MCF 10A (cell line): ENCODE measurements at regions of chr15 and their contacts with region 1.

Region 1: DNA sequence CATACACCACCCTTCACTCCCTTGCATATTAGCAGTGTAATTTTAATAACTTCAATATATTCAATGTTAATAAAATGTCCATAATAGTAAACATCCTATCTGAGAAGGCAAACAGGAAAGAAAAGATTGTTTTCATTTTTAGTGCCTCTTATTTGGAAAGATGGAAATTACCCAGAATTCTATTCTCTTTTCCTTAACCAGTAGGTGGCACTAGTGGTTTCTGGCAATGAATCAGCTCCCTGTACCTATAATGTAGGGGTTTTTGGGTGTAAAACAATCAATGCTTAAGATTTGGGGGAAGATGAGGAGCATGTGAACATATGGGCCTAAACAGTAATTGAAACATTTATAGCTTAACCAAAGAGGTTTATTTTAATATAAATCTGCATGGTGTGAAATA is 5.7 kb upstream of the SEMA6D start:
- DNase-seq: peak; percentile 51
- H3K4me3 Mint-ChIP-seq: no peak overlapping the region
- H3K27ac Mint-ChIP-seq: no peak overlapping the region
- H3K4me1 Mint-ChIP-seq: peaks cover under 1% of the 10 kb centered on the region
- H3K27me3 Mint-ChIP-seq: no peaks in the 10 kb centered on the region
- CTCF ChIP-seq: peak; percentile 57

Region 2: DNA sequence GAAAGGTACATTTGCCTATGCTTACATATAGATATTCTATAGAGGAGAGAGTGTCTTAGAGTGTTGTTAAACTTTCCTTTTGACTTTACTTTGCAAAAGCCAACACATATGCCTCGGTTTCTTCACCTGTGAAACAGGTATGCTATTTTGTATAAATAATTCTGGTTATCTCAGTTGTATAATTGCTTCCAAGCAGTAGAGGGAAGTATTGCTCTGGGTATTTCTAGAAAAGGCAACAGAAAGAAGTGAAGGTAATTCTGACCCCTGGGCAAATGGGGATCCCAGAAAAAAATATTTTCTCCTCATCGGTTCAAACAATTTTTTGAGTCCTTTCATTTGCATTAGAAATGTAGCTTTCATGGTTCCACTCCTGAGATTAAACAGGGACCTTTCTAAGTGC is 210.8 kb before region 1 on chr15:
- CTCF ChIA-PET with region 1: interaction called, 3 read pairs
- POLR2A ChIA-PET with region 1: no interaction called
- intact Hi-C with region 1: loop called (anchors 1 kb)
- DNase-seq: no peak
- H3K4me3 Mint-ChIP-seq: no peak overlapping the region
- H3K27ac Mint-ChIP-seq: no peak overlapping the region
- H3K4me1 Mint-ChIP-seq: no peaks in the 10 kb centered on the region
- H3K27me3 Mint-ChIP-seq: no peaks in the 10 kb centered on the region
- CTCF ChIP-seq: peak; percentile 31

Region 3: GRCh38 chr15:48244921-48245320 is 533.3 kb after region 1 on chr15:
- CTCF ChIA-PET with region 1: interaction called, 4 read pairs
- POLR2A ChIA-PET with region 1: no interaction called
- intact Hi-C with region 1: loop called (anchors 5 kb)
- DNase-seq: peak; percentile 81
- H3K4me3 Mint-ChIP-seq: no peak overlapping the region
- H3K27ac Mint-ChIP-seq: no peak overlapping the region
- H3K4me1 Mint-ChIP-seq: peaks cover 6% of the 10 kb centered on the region
- H3K27me3 Mint-ChIP-seq: no peaks in the 10 kb centered on the region
- CTCF ChIP-seq: no peak